Natural killer cell (primary cell): ENCODE measurements at regions of chr5 and their contacts with region 1.

Region 1: DNA sequence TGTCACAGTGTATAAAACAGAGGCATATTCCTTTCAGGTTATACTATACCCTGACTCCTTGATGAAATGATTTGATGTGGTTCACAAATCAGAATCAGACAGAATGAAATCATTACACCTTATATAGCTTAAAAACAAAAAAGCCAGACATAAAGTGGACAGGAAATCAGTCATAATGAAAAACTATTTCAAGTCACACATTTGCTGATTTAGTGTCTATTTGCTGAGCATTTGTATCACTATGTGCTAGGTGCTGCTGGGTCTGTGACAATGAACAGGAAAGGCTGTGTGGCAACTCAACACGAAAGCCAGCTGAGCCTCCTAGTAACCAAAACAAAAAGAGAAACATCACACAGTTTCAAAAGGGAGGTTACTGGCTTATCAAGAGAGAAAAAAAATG is 194.0 kb downstream of the EFNA5 start:
- DNase-seq: peak; percentile 42 to 79
- ATAC-seq: peak; percentile 66 to 85 (median 81)
- H3K4me3 ChIP-seq: no peak overlapping the region
- H3K4me3 Mint-ChIP-seq: peak overlapping the region; percentile 86
- H3K27ac ChIP-seq: peak overlapping the region; percentile 100
- H3K27ac Mint-ChIP-seq: peak overlapping the region; percentile 95 to 97
- H3K4me1 ChIP-seq: peaks cover 35% of the 10 kb centered on the region
- H3K4me1 Mint-ChIP-seq: peaks cover 71 to 77% of the 10 kb centered on the region in 2 donors
- H3K27me3 ChIP-seq: no peaks in the 10 kb centered on the region
- H3K27me3 Mint-ChIP-seq: no peaks in the 10 kb centered on the region
- CTCF ChIP-seq: no peak

Region 2: DNA sequence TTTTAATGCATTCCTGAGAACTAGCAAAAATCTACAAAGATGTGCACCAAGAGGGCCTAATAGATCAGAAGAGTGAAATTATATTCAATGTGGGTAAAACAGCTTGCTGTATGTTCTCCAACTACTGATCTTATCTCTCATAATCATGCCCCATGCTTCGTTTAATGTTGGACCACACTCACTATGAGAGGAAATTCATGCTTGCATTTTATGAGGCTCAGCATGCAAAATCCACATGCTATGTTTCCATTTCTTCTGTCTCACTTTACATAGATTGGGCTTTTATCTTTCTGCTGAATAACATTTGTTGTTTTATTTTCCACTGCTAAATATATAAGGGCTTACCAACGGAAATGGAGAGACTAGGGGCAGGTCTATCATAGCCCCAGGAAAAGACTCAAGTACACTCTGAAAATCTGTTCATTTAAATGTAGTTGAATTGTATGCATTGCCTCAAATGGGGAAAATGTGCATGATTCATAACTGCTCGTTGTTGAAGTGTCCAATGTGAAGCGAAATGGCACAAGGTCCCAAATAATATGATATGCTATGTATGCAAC is 280.2 kb before region 1 on chr5:
- intact Hi-C with region 1: no loop called
- DNase-seq: no peak
- ATAC-seq: no peak
- H3K4me3 ChIP-seq: no peak overlapping the region
- H3K4me3 Mint-ChIP-seq: no peak overlapping the region
- H3K27ac ChIP-seq: no peak overlapping the region
- H3K27ac Mint-ChIP-seq: no peak overlapping the region
- H3K4me1 ChIP-seq: no peaks in the 10 kb centered on the region
- H3K4me1 Mint-ChIP-seq: no peaks in the 10 kb centered on the region
- H3K27me3 ChIP-seq: no peaks in the 10 kb centered on the region
- H3K27me3 Mint-ChIP-seq: peaks cover 9 to 18% of the 10 kb centered on the region in 2 donors
- CTCF ChIP-seq: no peak

Region 3: DNA sequence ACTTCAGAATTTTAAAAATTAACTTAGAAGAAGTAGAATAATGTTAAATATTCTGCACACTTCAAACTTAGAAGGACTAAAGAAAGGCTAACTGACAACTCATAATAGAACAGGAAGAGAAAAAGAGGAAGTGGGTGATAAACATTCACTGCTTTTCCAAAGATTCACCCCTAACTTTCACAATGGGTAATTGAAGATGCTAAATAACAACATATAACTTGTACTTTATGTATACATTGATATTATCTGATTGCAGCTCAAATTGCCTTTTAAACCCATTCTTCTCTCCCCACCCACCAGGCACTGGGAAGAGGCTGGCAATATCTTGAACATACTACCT is 182.6 kb before region 1 on chr5:
- intact Hi-C with region 1: loop called (anchors 5 kb)
- DNase-seq: no peak
- ATAC-seq: no peak
- H3K4me3 ChIP-seq: no peak overlapping the region
- H3K4me3 Mint-ChIP-seq: no peak overlapping the region
- H3K27ac ChIP-seq: no peak overlapping the region
- H3K27ac Mint-ChIP-seq: no peak overlapping the region
- H3K4me1 ChIP-seq: peaks cover 20% of the 10 kb centered on the region
- H3K4me1 Mint-ChIP-seq: peaks cover 55 to 57% of the 10 kb centered on the region in 2 donors
- H3K27me3 ChIP-seq: no peaks in the 10 kb centered on the region
- H3K27me3 Mint-ChIP-seq: peaks cover 3 to 11% of the 10 kb centered on the region in 2 donors
- CTCF ChIP-seq: no peak

Region 4: GRCh38 chr5:107365320-107366109 is 111.3 kb before region 1 on chr5:
- intact Hi-C with region 1: loop called (anchors 2 kb)
- DNase-seq: peak; percentile 21 to 45
- ATAC-seq: peak; percentile 78 to 87 (median 83)
- H3K4me3 ChIP-seq: no peak overlapping the region
- H3K4me3 Mint-ChIP-seq: peak overlapping the region; percentile 72
- H3K27ac ChIP-seq: peak overlapping the region; percentile 74
- H3K27ac Mint-ChIP-seq: peak overlapping the region; percentile 78 to 88
- H3K4me1 ChIP-seq: peaks cover 11% of the 10 kb centered on the region
- H3K4me1 Mint-ChIP-seq: peaks cover 31 to 40% of the 10 kb centered on the region in 2 donors
- H3K27me3 ChIP-seq: no peaks in the 10 kb centered on the region
- H3K27me3 Mint-ChIP-seq: no peaks in the 10 kb centered on the region
- CTCF ChIP-seq: no peak

Region 5: GRCh38 chr5:107389130-107389774 is 87.5 kb before region 1 on chr5:
- intact Hi-C with region 1: loop called (anchors 2 kb)
- DNase-seq: peak; percentile 31 to 62
- ATAC-seq: peak; percentile 77 to 88 (median 85)
- H3K4me3 ChIP-seq: no peak overlapping the region
- H3K4me3 Mint-ChIP-seq: peak overlapping the region; percentile 85
- H3K27ac ChIP-seq: peak overlapping the region; percentile 59
- H3K27ac Mint-ChIP-seq: peak overlapping the region; percentile 89 to 91
- H3K4me1 ChIP-seq: peaks cover 18% of the 10 kb centered on the region
- H3K4me1 Mint-ChIP-seq: peaks cover 34 to 39% of the 10 kb centered on the region in 2 donors
- H3K27me3 ChIP-seq: no peaks in the 10 kb centered on the region
- H3K27me3 Mint-ChIP-seq: no peaks in the 10 kb centered on the region
- CTCF ChIP-seq: no peak

Region 6: DNA sequence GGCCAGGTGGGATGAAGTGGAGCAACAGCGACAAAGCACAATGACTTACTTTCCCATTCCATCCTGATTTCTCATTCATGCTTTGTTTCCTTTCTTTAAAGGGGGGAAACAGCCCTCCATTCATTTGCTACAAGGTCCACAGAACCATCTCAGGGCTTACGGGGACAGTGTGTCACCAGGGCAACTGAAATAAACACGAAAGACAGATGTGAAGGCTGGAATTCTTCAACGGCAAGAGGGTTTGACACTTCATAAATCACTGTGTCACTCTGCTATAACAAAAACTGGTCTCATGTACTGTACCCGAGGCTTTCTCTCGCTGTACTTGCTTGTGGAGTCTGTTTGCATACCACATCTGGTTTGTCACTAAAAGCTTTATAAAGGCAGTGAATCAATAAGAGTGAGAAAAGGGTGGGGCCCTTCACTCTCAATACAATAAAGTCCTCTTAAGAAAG is 43.1 kb after region 1 on chr5:
- intact Hi-C with region 1: loop called (anchors 2 kb)
- DNase-seq: peak in 1 of 2 donors; percentile 31
- ATAC-seq: peak; percentile 84 to 93 (median 91)
- H3K4me3 ChIP-seq: no peak overlapping the region
- H3K4me3 Mint-ChIP-seq: peak overlapping the region; percentile 71
- H3K27ac ChIP-seq: peak overlapping the region; percentile 64
- H3K27ac Mint-ChIP-seq: peak overlapping the region; percentile 88 to 89
- H3K4me1 ChIP-seq: peaks cover 6% of the 10 kb centered on the region
- H3K4me1 Mint-ChIP-seq: peaks cover 13 to 18% of the 10 kb centered on the region in 2 donors
- H3K27me3 ChIP-seq: no peaks in the 10 kb centered on the region
- H3K27me3 Mint-ChIP-seq: peaks cover 0 to 7% of the 10 kb centered on the region in 2 donors
- CTCF ChIP-seq: no peak

Region 7: GRCh38 chr5:107571621-107572536 is 95.1 kb after region 1 on chr5:
- intact Hi-C with region 1: loop called (anchors 1 kb)
- DNase-seq: peak; percentile 90
- ATAC-seq: peak; percentile 88 to 94 (median 93)
- H3K4me3 ChIP-seq: peak overlapping the region; percentile 40
- H3K4me3 Mint-ChIP-seq: peak overlapping the region; percentile 80
- H3K27ac ChIP-seq: peak overlapping the region; percentile 72
- H3K27ac Mint-ChIP-seq: peak overlapping the region; percentile 88 to 90
- H3K4me1 ChIP-seq: peaks cover 20% of the 10 kb centered on the region
- H3K4me1 Mint-ChIP-seq: peaks cover 17 to 25% of the 10 kb centered on the region in 2 donors
- H3K27me3 ChIP-seq: no peaks in the 10 kb centered on the region
- H3K27me3 Mint-ChIP-seq: peaks cover 0 to 2% of the 10 kb centered on the region in 2 donors
- CTCF ChIP-seq: peak; percentile 95

Region 8: DNA sequence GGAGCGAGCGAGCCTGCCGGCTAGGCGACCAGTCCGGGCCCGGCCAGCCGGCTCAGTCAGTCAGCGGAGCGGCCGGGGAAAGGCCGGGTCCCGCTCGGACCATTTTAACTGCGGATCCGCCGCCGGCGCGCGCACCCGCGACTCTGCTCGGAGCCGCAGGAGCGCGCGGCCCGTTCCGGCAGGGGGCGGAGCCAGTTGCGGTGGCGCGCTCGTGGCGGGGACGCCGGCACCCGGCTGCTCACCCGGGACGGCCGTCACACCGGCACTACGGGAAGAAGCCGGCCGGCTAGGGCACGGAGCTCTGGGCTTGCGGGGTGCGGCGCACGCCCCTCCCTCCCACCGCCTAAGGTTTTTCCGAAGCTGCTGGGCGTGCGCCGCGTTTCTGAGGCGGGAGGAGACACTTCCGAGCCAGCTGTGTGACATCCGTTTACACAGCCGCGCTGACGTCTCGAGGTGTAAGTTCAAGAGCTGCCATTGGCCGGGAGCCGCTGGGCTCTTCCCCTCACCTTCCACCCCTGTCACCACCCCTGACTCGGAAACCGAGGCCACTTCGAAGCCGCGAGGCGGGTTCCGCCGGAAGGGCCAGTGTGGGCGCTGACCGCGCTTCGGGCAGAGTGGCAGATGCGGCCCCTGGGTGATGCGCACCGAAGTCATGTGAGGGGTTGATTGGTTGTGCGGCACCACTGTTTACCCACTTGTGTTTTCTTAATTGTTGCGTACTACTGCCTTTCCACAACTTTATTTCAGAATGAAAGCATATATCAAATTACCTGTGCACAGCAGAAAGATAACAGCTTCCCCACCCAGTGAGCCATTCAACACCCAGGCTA is 905.4 kb after region 1 on chr5 and contains the start of gene FBXL17:
- intact Hi-C with region 1: loop called (anchors 5 kb)
- DNase-seq: peak; percentile 90 to 97
- ATAC-seq: peak; percentile 76 to 91 (median 79)
- H3K4me3 ChIP-seq: peak within 1 kb of the TSS; percentile 62
- H3K4me3 Mint-ChIP-seq: peak within 1 kb of the TSS; percentile 89
- H3K27ac ChIP-seq: peak within 1 kb of the TSS; percentile 95
- H3K27ac Mint-ChIP-seq: peak within 1 kb of the TSS; percentile 93 to 94
- H3K4me1 ChIP-seq: peaks cover 8% of the 10 kb centered on the region
- H3K4me1 Mint-ChIP-seq: peaks cover 39 to 41% of the 10 kb centered on the region in 2 donors
- H3K27me3 ChIP-seq: no peaks in the 10 kb centered on the region
- H3K27me3 Mint-ChIP-seq: peaks cover 0 to 2% of the 10 kb centered on the region in 2 donors
- CTCF ChIP-seq: no peak
- total RNA-seq, gene FBXL17: 34.2 to 46.8 (median 34.9) TPM